Natural killer cell (primary cell): ENCODE measurements at regions of chr22 and their contacts with region 1.

Region 1: DNA sequence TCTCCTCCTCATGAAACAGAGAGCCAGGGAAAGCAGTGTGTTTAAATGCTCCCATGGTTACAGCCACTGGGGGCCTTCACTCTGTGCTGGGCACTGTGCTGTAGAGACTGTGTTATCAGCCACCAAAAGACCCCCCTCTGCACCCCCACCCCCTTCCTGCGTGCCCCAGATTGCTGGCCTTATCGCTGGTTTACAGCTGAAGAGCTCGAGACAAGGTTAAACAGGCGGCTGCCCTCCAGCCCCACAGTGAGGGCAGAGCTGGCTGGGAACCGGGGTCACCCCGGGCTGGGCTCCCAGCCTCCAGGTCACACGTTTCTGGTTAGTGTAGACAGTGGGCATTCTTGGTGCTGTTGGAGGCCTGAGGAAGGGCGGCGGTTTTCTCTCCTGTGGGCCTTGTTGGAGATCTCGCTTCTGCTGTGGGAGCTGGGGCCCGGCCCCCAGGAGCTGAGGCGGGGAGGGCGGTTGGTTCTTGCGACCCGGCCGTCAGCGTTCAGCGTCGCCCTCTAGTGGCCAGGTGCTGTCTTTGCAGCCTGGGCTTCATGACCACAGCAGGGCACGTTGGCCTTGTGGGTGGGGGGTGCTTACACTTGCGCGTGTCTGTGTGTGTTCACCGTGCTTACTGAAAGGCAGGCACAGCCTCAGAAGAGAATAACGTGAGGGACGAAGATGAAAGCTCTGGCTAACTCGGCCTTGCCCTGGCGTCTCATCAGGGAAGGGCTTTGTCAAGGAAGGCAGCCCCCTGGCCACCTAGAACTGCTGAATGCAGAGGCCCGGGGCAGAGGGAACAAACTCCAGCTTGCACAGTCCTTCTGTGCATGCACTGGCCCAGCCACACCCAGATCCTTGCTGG is 40.8 kb downstream of the TBC1D22A start:
- DNase-seq: peak; percentile 66 to 91
- ATAC-seq: peak; percentile 73 to 88 (median 87)
- H3K4me3 ChIP-seq: no peak overlapping the region
- H3K4me3 Mint-ChIP-seq: no peak overlapping the region
- H3K27ac ChIP-seq: peak overlapping the region; percentile 8
- H3K27ac Mint-ChIP-seq: peak overlapping the region; percentile 76 to 79
- H3K4me1 ChIP-seq: peaks cover 21% of the 10 kb centered on the region
- H3K4me1 Mint-ChIP-seq: peaks cover 52 to 63% of the 10 kb centered on the region in 2 donors
- H3K27me3 ChIP-seq: no peaks in the 10 kb centered on the region
- H3K27me3 Mint-ChIP-seq: no peaks in the 10 kb centered on the region
- CTCF ChIP-seq: peak; percentile 91

Region 2: DNA sequence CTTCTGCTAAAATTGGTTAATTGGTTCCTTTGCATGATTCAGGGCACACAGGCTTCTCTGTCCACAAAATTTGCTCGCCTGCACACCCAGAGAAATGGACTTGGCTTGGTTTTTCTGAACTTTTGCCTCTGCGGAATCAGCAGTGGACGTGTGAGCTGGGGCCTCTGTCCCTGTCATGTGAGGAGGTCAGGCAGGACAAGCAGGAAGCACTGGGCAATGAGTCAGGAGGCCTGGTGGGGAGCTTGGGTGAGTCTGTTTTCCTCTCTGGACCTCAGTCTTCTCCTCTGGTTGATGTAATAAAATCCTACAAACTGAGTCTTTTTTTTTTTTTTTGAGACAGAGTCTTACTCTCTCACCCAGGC is 255.4 kb before region 1 on chr22:
- intact Hi-C with region 1: no loop called
- DNase-seq: no peak
- ATAC-seq: no peak
- H3K4me3 ChIP-seq: no peak overlapping the region
- H3K4me3 Mint-ChIP-seq: no peak overlapping the region
- H3K27ac ChIP-seq: no peak overlapping the region
- H3K27ac Mint-ChIP-seq: no peak overlapping the region
- H3K4me1 ChIP-seq: no peaks in the 10 kb centered on the region
- H3K4me1 Mint-ChIP-seq: no peaks in the 10 kb centered on the region
- H3K27me3 ChIP-seq: no peaks in the 10 kb centered on the region
- H3K27me3 Mint-ChIP-seq: peaks cover 0 to 13% of the 10 kb centered on the region in 2 donors
- CTCF ChIP-seq: no peak

Region 3: DNA sequence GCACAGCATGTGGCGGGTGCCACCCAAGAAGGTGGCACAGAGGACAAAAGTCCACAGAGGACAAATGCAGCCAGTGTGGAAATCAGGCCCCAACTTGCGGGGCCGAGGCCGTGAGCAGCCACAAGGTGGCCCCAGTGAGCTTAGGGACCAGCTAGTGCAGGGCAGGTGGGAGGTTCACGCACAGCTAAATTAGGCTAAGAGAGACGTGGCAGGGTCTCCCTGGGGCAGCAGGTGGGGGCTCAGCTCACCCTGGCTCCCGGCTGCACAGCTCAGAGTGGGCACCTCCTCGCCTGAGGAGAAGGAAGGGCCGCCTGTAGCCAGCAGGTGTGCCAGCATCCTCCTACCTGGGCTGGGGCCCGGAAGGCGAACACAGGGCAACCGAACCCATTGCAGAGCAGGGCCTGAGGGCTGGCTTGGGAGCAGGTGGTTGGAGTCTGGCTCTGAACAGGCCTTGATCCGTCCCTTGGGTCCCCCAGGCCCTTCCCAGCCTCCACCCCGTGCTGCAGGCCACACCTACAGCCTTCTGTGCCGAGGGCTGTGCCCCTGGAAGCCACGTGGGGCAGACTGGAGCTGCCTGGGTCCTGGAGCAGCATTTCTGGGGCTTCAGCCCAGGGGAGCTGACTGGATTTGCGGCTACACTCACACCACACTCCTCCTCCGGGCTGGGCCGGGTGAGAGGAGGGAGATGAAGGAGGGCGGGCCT is 239.7 kb before region 1 on chr22:
- intact Hi-C with region 1: loop called (anchors 1 kb)
- DNase-seq: peak; percentile 71 to 85
- ATAC-seq: peak; percentile 91 to 98 (median 95)
- H3K4me3 ChIP-seq: no peak overlapping the region
- H3K4me3 Mint-ChIP-seq: no peak overlapping the region
- H3K27ac ChIP-seq: no peak overlapping the region
- H3K27ac Mint-ChIP-seq: no peak overlapping the region
- H3K4me1 ChIP-seq: peaks cover 30% of the 10 kb centered on the region
- H3K4me1 Mint-ChIP-seq: peaks cover 0 to 10% of the 10 kb centered on the region in 2 donors
- H3K27me3 ChIP-seq: no peaks in the 10 kb centered on the region
- H3K27me3 Mint-ChIP-seq: no peaks in the 10 kb centered on the region
- CTCF ChIP-seq: peak; percentile 80

Region 4: GRCh38 chr22:46739094-46739870 is 64.0 kb before region 1 on chr22:
- intact Hi-C with region 1: loop called (anchors 1 kb)
- DNase-seq: peak; percentile 61 to 87
- ATAC-seq: peak; percentile 60 to 74 (median 73)
- H3K4me3 ChIP-seq: no peak overlapping the region
- H3K4me3 Mint-ChIP-seq: peak overlapping the region; percentile 87
- H3K27ac ChIP-seq: peak overlapping the region; percentile 57
- H3K27ac Mint-ChIP-seq: peak overlapping the region; percentile 76 to 81
- H3K4me1 ChIP-seq: peaks cover 44% of the 10 kb centered on the region
- H3K4me1 Mint-ChIP-seq: peaks cover 32 to 45% of the 10 kb centered on the region in 2 donors
- H3K27me3 ChIP-seq: no peaks in the 10 kb centered on the region
- H3K27me3 Mint-ChIP-seq: no peaks in the 10 kb centered on the region
- CTCF ChIP-seq: peak; percentile 39

Region 5: GRCh38 chr22:46762238-46763050 is 40.8 kb before region 1 on chr22 and contains the start of gene TBC1D22A:
- intact Hi-C with region 1: loop called (anchors 1 kb)
- DNase-seq: peak; percentile 94 to 97
- ATAC-seq: peak; percentile 88 to 94 (median 91)
- H3K4me3 ChIP-seq: peak within 1 kb of the TSS; percentile 96
- H3K4me3 Mint-ChIP-seq: peak within 1 kb of the TSS; percentile 99
- H3K27ac ChIP-seq: peak within 1 kb of the TSS; percentile 92
- H3K27ac Mint-ChIP-seq: peak within 1 kb of the TSS; percentile 99 to 100
- H3K4me1 ChIP-seq: peaks cover 46% of the 10 kb centered on the region
- H3K4me1 Mint-ChIP-seq: peaks cover 62 to 66% of the 10 kb centered on the region in 2 donors
- H3K27me3 ChIP-seq: no peaks in the 10 kb centered on the region
- H3K27me3 Mint-ChIP-seq: no peaks in the 10 kb centered on the region
- CTCF ChIP-seq: no peak
- total RNA-seq, gene TBC1D22A: 47.4 to 53.7 (median 53.2) TPM

Region 6: GRCh38 chr22:46791201-46791731 is 12.0 kb before region 1 on chr22:
- intact Hi-C with region 1: loop called (anchors 1 kb)
- DNase-seq: peak; percentile 76 to 93
- ATAC-seq: peak; percentile 90 to 95 (median 95)
- H3K4me3 ChIP-seq: peak overlapping the region; percentile 2
- H3K4me3 Mint-ChIP-seq: peak overlapping the region; percentile 83
- H3K27ac ChIP-seq: peak overlapping the region; percentile 92
- H3K27ac Mint-ChIP-seq: peak overlapping the region; percentile 97 to 99
- H3K4me1 ChIP-seq: peaks cover 49% of the 10 kb centered on the region
- H3K4me1 Mint-ChIP-seq: peaks cover 47% of the 10 kb centered on the region in 2 donors
- H3K27me3 ChIP-seq: no peaks in the 10 kb centered on the region
- H3K27me3 Mint-ChIP-seq: no peaks in the 10 kb centered on the region
- CTCF ChIP-seq: no peak